ENCODE measurements at regions of chr12 and their contacts with region 1.

Region 1: GRCh38 chr12:56996793-56997545 is 9.4 kb downstream of the ZBTB39 start:
- DNase-seq: peak in 1 of 2 experiments; percentile 37
- H3K4me3 ChIP-seq: no peak overlapping the region
- H3K27ac ChIP-seq: no peak overlapping the region
- H3K4me1 ChIP-seq: no peaks in the 10 kb centered on the region
- H3K27me3 ChIP-seq: no peaks in the 10 kb centered on the region
- CTCF ChIP-seq: no peak
- EP300 ChIP-seq: no peak
- POLR2A ChIP-seq: no peak
- RAD21 ChIP-seq: no peak

Region 2: GRCh38 chr12:56751712-56752598 is 245.0 kb before region 1 on chr12 and contains the start of gene PRIM1:
- CTCF ChIA-PET with region 1: interaction called, 187 read pairs
- POLR2A ChIA-PET with region 1: interaction called, 3 read pairs
- DNase-seq: peak; percentile 64 to 94
- H3K4me3 ChIP-seq: peak within 1 kb of the TSS; percentile 70 to 95 (median 90)
- H3K27ac ChIP-seq: peak within 1 kb of the TSS; percentile 98
- H3K4me1 ChIP-seq: peaks cover 0 to 4% (median 0%) of the 10 kb centered on the region in 4 experiments; a peak in 2 of 7 replicates
- H3K27me3 ChIP-seq: no peaks in the 10 kb centered on the region
- CTCF ChIP-seq: no peak
- EP300 ChIP-seq: no peak
- POLR2A ChIP-seq: peak in 1 of 2 experiments; percentile 95; a peak in 2 of 3 replicates
- RAD21 ChIP-seq: no peak
- total RNA-seq, gene PRIM1: 52.4 and 57.9 TPM in 2 replicates

Region 3: DNA sequence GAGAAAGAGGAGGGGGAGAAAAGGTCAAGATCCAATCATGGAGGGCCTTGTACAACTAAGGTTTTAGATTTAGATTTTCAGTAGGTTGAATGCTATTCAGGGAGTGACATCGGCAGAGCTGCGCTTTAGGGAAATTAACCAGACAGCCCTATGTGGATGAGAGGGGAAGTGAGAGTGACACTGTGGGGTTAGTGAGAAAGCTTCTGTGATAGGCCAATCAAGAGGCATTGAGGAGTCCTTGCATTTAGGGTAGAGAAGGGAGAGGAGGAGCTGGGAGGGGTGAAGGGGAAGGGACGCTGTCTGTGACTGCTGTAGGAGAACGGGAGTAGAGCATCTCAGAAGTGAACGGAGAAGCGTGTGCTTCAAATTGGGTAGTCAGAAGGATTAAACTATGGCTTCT is 230.4 kb before region 1 on chr12:
- CTCF ChIA-PET with region 1: interaction called, 187 read pairs
- POLR2A ChIA-PET with region 1: interaction called, 5 read pairs
- DNase-seq: no peak
- H3K4me3 ChIP-seq: no peak overlapping the region
- H3K27ac ChIP-seq: no peak overlapping the region
- H3K4me1 ChIP-seq: peaks cover 0 to 7% (median 2%) of the 10 kb centered on the region in 4 experiments; a peak in 2 of 7 replicates
- H3K27me3 ChIP-seq: no peaks in the 10 kb centered on the region
- CTCF ChIP-seq: no peak
- EP300 ChIP-seq: no peak
- POLR2A ChIP-seq: no peak
- RAD21 ChIP-seq: no peak

Region 4: GRCh38 chr12:56839915-56840325 is 157.0 kb before region 1 on chr12:
- CTCF ChIA-PET with region 1: interaction called, 55 read pairs
- POLR2A ChIA-PET with region 1: interaction called, 3 read pairs
- DNase-seq: peak; percentile 51 to 72
- H3K4me3 ChIP-seq: no peak overlapping the region
- H3K27ac ChIP-seq: no peak overlapping the region
- H3K4me1 ChIP-seq: no peaks in the 10 kb centered on the region
- H3K27me3 ChIP-seq: no peaks in the 10 kb centered on the region
- CTCF ChIP-seq: peak; percentile 86 to 96 (median 94)
- EP300 ChIP-seq: no peak
- POLR2A ChIP-seq: no peak
- RAD21 ChIP-seq: peak; percentile 96 to 98

Measured in H1 (cell line).